Natural killer cell (primary cell): ENCODE measurements at regions of chr2 and their contacts with region 1.

Region 1: GRCh38 chr2:128273469-128274081 is 45.1 kb downstream of the HS6ST1 start:
- DNase-seq: peak; percentile 66 to 68
- ATAC-seq: peak; percentile 92 to 97 (median 92)
- H3K4me3 ChIP-seq: peak overlapping the region; percentile 16
- H3K4me3 Mint-ChIP-seq: peak overlapping the region; percentile 87
- H3K27ac ChIP-seq: peak overlapping the region; percentile 58
- H3K27ac Mint-ChIP-seq: peak overlapping the region; percentile 87 to 88
- H3K4me1 ChIP-seq: peaks cover 66% of the 10 kb centered on the region
- H3K4me1 Mint-ChIP-seq: peaks cover 36 to 72% of the 10 kb centered on the region in 2 donors
- H3K27me3 ChIP-seq: no peaks in the 10 kb centered on the region
- H3K27me3 Mint-ChIP-seq: no peaks in the 10 kb centered on the region
- CTCF ChIP-seq: no peak

Region 2: DNA sequence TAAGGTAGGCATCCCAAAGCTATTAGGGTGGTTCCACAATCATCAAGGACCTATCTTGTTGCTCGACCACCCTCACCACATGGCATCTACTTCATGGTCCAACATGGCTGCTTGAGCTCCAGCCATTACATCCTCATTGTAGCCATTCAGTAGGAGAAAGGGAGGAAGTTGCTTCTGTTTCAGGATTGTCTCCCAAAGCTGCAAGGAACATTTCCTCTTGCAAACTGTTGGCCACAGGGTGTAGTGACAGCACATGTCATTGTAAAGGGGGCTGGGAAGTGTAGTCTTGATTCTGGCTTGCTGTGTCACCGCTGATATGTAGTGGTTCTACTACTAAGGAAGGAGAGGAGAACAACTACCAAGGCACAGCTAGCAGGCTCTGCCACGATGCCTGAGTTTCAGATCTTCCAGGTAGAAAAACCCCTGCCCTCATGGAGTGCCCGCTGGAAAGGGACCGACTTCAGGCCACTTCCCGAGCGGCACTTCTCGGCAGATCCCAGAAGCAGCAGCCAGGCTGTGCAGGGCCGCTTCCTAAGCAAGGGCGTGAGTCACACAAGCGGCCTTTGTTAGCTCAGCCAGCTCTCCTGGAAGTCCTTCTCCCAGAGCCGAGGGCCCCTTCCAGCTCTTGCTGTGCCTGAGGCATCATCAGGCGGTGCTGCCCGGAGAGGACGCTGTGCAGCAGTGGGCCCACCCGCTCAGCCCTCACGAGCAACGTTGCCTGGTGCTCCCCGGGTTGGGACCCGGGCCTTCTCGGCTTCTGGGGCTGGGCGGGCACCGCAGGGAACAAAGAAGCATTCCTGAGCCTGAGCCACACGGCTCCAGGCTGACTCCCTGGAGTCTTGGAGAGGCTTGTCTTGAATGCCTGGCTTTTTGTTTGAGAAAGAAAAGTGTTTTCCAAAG is 13.1 kb before region 1 on chr2:
- intact Hi-C with region 1: no loop called
- DNase-seq: no peak
- ATAC-seq: no peak
- H3K4me3 ChIP-seq: no peak overlapping the region
- H3K4me3 Mint-ChIP-seq: no peak overlapping the region
- H3K27ac ChIP-seq: no peak overlapping the region
- H3K27ac Mint-ChIP-seq: no peak overlapping the region
- H3K4me1 ChIP-seq: peaks cover 2% of the 10 kb centered on the region
- H3K4me1 Mint-ChIP-seq: peaks cover 11 to 20% of the 10 kb centered on the region in 2 donors
- H3K27me3 ChIP-seq: no peaks in the 10 kb centered on the region
- H3K27me3 Mint-ChIP-seq: peaks cover 0 to 6% of the 10 kb centered on the region in 2 donors
- CTCF ChIP-seq: no peak

Region 3: DNA sequence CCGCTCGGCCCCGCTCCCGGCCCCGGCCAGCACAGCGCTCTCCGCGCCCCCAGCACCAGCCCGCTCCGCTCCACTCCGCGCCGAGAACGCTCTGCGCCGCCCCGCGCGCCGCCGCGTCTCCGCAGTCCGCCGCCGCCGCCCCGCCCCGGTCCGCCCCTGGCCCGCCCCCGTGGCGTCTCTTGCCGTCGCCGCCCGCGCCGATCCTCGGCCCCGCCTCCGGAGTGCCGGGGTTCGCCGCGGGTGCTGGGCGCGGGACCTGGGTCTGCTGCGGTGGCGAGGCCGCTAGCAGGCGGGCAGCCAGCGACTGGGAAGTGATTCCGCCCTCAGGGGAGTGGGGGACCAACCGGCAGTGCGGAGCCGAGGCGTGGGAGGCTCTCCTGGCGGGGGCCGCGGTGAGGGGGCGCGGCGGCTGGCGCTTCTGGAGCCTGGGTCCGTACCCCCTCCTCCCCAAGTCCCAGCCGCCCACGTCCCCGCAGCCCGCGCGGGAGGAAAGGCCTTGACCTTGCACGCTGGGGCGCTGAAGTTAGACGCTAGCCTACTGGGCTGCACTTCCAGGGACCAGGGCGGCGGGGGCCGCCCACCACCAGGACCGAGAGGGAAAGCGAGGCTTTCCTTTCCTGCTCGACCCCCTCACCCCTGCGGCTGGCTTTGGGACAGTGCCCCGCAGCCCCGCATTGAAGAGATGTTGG is 45.3 kb after region 1 on chr2 and contains the start of gene HS6ST1:
- intact Hi-C with region 1: loop called (anchors 5 kb)
- DNase-seq: peak; percentile 90 to 93
- ATAC-seq: peak; percentile 79 to 91 (median 81)
- H3K4me3 ChIP-seq: peak within 1 kb of the TSS; percentile 61
- H3K4me3 Mint-ChIP-seq: peak within 1 kb of the TSS; percentile 95
- H3K27ac ChIP-seq: no peak within 1 kb of the TSS
- H3K27ac Mint-ChIP-seq: peak within 1 kb of the TSS in 1 of 2 donors; percentile 78
- H3K4me1 ChIP-seq: peaks cover 48% of the 10 kb centered on the region
- H3K4me1 Mint-ChIP-seq: peaks cover 44 to 51% of the 10 kb centered on the region in 2 donors
- H3K27me3 ChIP-seq: no peaks in the 10 kb centered on the region
- H3K27me3 Mint-ChIP-seq: peaks cover 0 to 5% of the 10 kb centered on the region in 2 donors
- CTCF ChIP-seq: no peak
- total RNA-seq, gene HS6ST1: 18.9 to 35.9 (median 28.8) TPM